SK-N-SH (cell line): ENCODE measurements at regions of chr6 and their contacts with region 1.

Region 1: DNA sequence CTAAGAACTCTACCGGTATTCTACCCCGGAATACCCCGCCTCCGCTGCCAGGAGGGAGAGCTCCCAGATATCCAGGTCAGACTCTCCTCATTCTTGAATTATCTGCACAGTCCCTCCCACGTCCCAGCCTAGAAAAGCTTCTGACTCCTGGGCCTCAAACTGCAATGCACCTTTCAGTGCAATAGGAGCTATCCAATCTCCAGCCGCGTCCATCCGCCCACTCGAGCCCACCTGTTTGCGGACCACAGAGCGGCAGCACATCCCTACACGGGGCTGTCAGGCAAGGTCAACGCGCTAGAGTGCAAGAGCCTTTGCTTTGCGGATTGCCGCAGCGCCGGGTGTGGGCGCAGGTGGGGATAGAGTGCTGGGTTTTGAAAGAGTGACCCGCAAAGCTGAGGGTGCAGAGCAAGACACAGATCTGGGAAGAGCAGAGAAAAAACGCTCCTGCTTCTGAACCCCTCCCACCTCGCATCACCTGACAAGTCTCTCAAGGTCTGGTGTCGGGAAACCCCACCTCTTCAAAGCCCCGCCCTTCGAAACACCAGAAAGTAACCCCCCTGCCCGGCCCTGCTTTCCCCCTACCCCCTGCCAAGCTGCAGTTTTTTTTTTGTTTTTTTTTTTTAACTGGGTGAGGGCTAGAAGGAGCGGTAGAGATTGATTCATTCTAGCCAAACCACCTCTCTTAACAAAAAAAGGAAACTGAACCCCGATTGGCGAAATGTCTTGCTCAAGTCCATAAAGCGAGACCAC is 1.3 kb downstream of the TAPBP start:
- DNase-seq: peak; percentile 75
- H3K4me3 ChIP-seq: peak overlapping the region; percentile 76 to 94
- H3K27ac ChIP-seq: peak overlapping the region; percentile 89 to 94
- H3K4me1 ChIP-seq: peaks cover 0 to 23% of the 10 kb centered on the region in 2 experiments; a peak in 1 of 4 replicates
- H3K27me3 ChIP-seq: no peaks in the 10 kb centered on the region
- CTCF ChIP-seq: no peak
- EP300 ChIP-seq: no peak
- RAD21 ChIP-seq: 0 out of 2 replicates have a peak, but pooled peaks have one; percentile 11

Region 2: DNA sequence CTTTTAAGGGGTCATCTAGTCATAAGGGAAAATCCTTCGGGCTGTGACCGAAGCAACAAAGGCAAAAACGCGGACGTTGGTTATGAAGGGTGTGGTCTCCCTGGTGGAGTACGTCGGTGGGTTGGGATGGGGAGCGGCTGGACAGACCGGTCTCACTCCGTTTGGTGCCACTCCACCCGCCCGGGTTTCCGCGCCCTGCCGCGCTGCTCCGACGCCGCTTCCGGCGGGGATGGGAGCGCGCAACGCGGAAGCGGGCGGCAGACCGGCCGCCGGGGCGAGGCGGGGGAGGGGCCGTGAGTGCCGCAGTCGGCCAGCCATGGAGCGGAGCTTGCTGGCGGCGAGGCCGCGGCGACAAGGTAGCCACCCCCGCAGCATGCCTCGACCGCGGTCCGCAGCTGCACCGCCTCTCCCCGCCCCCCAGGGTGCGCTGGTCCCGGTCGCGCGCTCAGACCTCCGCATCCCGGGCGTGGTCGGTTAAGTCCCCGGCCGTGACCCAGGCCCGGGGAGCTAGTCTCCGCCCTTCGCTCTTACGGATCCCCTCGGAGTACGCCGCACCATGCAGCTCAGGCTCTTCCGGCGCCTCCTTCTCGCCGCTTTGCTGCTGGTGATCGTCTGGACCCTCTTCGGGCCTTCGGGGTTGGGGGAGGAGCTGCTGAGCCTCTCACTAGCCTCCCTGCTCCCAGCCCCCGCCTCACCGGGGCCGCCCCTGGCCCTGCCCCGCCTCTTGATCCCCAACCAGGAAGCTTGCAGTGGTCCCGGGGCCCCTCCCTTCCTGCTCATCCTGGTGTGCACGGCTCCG is 35.5 kb before region 1 on chr6 and contains the start of gene B3GALT4:
- CTCF ChIA-PET with region 1: interaction called, 13 read pairs
- POLR2A ChIA-PET with region 1: interaction called, 10 read pairs
- DNase-seq: peak; percentile 92
- H3K4me3 ChIP-seq: peak within 1 kb of the TSS; percentile 49 to 76
- H3K27ac ChIP-seq: peak within 1 kb of the TSS; percentile 67 to 86
- H3K4me1 ChIP-seq: peaks cover 31 to 36% of the 10 kb centered on the region in 2 experiments; a peak in 3 of 4 replicates
- H3K27me3 ChIP-seq: no peaks in the 10 kb centered on the region
- CTCF ChIP-seq: peak; percentile 51
- EP300 ChIP-seq: no peak
- RAD21 ChIP-seq: no peak
- polyA plus RNA-seq, gene B3GALT4: 0.55 and 0.56 TPM in 2 replicates